ENCODE measurements at regions of chr12 and their contacts with region 1.

Region 1: DNA sequence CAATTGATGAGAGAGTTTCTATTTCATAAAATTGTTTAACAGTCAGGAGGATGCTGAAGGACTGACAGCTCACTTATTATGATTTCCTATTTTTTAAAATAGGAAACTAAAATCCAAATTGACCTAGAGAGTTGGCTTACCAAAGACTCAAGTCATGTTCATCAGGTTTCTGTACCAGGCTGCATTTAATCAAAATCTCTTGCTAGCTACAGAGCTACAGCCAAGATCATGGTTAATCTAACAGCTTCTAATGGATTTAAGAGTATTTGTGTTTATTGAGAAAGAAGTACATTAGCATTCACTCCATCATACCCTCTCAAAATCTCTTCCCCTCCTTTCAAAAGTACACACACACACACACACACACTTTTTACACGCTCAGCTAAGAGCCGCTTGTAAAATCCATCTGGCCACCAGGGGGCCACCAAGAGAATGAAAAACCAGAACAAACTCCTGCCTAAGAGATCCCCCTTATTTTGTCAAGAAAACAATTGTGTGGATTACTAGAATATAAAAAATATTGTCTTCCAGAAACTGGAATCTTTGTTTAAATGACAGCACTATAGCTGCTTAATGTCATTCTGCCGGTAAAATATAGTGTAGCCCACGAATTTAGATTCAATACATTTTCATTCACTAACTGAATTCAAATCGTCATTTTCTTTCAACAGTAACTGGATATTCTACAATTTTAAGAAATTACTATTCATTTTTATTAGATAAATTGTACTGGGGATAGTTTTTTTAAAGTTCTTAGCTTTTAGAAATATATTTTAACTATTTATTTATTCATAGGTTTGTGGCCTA is 334.0 kb downstream of the BTG1 start:
- DNase-seq: peak; percentile 43 to 70
- H3K4me3 ChIP-seq: no peak overlapping the region
- H3K4me3 Mint-ChIP-seq: no peak overlapping the region
- H3K27ac Mint-ChIP-seq: no peak overlapping the region
- H3K4me1 ChIP-seq: no peaks in the 10 kb centered on the region
- H3K4me1 Mint-ChIP-seq: no peaks in the 10 kb centered on the region
- H3K27me3 ChIP-seq: no peaks in the 10 kb centered on the region
- H3K27me3 Mint-ChIP-seq: no peaks in the 10 kb centered on the region
- CTCF ChIP-seq: peak; percentile 80 to 83

Region 2: DNA sequence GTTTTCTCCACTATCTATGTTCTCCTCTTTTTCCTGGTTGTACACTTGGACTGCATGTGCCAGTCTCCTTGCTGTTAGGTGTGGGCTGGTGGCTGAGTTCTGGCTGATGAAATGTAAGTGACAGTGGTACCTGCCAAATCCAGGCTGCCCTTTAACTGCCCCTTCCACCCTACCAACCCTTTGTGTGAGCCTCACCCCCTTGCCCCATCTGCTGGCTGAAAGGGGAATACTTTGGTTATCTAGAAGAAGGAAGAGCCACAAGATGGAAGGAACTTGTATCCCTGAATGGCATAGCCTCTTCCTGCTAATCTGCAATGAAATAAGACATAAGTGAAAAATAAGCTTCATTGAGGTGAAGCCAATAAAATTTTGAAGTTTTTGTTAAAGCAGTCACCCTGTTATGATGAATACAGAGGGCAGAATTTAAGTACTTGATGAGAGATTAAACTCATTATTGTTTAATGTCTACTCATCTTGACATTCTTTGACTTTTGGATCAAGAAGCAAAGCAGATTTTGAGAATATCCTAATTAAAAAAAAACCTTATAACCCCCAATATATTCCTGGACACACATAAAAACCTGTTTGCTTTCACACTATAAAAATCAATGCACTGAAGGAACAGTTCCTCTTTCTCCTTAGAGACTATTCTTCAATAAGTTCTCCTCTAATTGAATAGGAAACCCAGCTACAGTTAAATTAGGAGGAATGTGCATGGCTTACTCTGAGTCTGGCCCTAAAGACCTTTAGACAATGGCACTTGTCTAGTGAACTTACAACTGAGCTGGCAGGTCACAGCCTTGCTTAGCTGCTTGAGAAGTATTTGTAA is 596.6 kb after region 1 on chr12:
- CTCF ChIA-PET with region 1: no interaction called
- POLR2A ChIA-PET with region 1: no interaction called
- intact Hi-C with region 1: loop called (anchors 10 kb)
- DNase-seq: peak; percentile 52 to 59
- H3K4me3 ChIP-seq: no peak overlapping the region
- H3K4me3 Mint-ChIP-seq: no peak overlapping the region
- H3K27ac Mint-ChIP-seq: no peak overlapping the region
- H3K4me1 ChIP-seq: no peaks in the 10 kb centered on the region
- H3K4me1 Mint-ChIP-seq: no peaks in the 10 kb centered on the region
- H3K27me3 ChIP-seq: no peaks in the 10 kb centered on the region
- H3K27me3 Mint-ChIP-seq: no peaks in the 10 kb centered on the region
- CTCF ChIP-seq: peak; percentile 61 to 64

Measured in Caco-2 (cell line).